ENCODE measurements at regions of chr2 and their contacts with region 1.

Region 1: DNA sequence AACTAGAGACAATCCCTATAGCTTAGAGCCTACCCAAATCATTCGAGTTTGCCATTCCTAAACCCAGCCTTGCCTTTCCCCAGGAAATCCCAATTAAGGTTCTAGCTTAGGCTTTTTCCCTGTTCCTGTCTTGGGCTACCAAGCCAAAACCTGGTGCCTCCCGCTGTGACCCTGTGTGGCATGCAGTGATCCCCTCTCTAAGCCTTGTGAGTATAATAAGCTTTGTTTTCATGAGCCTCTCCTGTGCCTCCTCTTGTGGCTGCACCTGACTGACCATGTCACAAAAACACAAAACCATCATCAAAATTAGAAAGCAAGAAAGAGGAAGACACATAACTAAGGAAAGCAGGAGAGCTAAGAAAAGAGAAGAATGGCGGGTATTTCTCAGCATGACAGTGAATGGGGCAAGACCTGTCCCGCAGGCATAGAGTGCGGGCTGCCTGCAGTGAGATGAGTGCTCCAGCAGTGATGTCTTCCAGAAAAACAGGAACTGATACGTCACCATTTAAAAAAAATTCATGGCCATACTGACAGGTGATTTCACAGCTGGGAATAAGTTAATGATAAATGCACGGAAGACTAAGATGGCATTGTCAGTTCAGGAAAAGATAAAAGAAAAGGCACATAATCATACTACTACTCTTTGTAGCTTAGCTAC is 9.2 kb upstream of the PAIP2B start:
- DNase-seq: peak in 1 of 2 experiments; percentile 55
- H3K4me3 ChIP-seq: no peak overlapping the region
- H3K27ac ChIP-seq: no peak overlapping the region; the same call in 1 of the 2 replicates
- H3K4me1 ChIP-seq: peaks cover 0 to 6% (median 0%) of the 10 kb centered on the region in 4 experiments; a peak in 3 of 7 replicates
- H3K27me3 ChIP-seq: no peaks in the 10 kb centered on the region; a peak in 1 of 7 replicates
- CTCF ChIP-seq: no peak
- EP300 ChIP-seq: no peak
- POLR2A ChIP-seq: no peak
- RAD21 ChIP-seq: no peak

Region 2: DNA sequence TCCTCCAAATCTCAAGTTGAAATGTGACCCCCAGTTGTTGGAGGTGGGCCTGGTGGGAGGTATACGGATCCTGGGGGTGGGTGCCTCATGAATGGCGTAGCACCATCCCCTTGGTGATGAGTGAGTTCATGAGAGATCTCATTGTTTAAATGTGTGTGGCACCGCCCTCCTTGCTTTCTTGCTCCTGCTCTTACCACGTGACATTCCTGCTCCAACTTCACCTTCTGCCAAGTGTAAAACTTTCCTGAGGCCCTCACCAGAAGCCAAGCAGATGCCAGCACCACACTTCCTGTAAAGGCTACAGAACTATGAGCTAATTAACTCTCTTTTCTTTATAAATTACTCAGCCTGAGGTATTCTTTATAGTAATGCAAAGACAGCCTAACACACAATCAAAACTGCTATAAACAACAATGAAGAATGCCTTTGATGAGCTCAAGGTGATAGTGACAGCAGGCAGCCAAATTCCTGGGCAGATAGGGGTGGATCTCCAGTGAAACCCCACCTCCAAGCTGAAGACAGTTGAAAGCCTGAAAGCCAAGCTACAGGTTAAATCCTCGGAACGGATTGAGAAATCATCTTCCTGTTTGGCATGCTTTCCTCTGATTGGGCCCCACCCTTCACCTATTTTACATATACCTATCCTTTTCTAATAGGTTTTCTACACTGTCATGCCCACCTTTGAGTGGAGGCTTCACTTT is 132.9 kb before region 1 on chr2:
- CTCF ChIA-PET with region 1: no interaction called
- POLR2A ChIA-PET with region 1: no interaction called
- DNase-seq: peak in 1 of 2 experiments; percentile 72
- H3K4me3 ChIP-seq: no peak overlapping the region
- H3K27ac ChIP-seq: no peak overlapping the region
- H3K4me1 ChIP-seq: peaks cover 0 to 7% (median 5%) of the 10 kb centered on the region in 4 experiments; a peak in 4 of 7 replicates
- H3K27me3 ChIP-seq: no peaks in the 10 kb centered on the region
- CTCF ChIP-seq: no peak
- EP300 ChIP-seq: no peak
- POLR2A ChIP-seq: no peak
- RAD21 ChIP-seq: no peak

Region 3: DNA sequence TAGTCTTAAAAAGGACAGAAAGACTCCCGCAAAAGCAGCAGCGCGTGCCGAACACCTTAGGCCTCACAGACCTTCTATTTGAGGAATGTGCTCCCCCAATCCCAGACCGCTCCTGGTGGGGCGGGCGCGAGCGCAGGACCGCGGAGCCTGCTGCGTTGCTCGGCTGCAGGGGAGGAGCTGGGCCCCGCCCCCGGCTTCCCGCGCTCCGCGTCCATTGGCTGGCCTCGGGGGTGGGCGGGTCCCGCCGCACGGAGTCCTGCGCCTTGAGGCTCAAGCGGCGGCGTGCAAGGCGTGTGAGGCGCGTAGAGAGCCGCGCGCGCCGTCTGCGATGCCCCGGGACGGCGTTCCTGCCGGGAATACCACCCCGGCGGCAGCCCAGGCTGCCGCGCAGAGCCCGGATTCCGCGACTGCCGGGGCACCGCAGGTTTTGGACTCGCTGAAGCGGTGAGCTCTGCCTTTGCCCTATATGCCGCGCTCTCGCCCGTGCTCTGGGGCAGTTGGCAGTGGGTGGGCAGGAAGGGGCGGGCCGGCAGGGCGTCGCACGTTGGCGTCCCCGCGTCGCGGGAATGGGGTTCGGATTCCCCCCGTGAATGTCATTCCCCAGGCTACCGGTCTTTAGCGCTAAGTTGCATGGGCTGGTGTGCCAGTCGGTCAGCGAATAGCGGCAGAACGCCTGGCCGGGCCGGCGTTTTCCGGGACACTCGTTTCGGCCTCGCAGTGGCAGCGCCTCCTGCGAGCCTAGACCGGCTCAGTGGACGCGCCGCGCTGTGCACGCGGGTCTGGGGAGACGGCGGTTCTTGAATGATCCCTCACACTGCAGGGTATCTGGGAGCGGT is 40.5 kb after region 1 on chr2:
- CTCF ChIA-PET with region 1: interaction called, 16 read pairs
- POLR2A ChIA-PET with region 1: no interaction called
- DNase-seq: peak; percentile 77 to 98
- H3K4me3 ChIP-seq: peak overlapping the region; percentile 49 to 72 (median 64)
- H3K27ac ChIP-seq: no peak overlapping the region
- H3K4me1 ChIP-seq: peaks cover 0 to 12% (median 7%) of the 10 kb centered on the region in 4 experiments; a peak in 5 of 7 replicates
- H3K27me3 ChIP-seq: peaks cover 0 to 7% (median 2%) of the 10 kb centered on the region in 4 experiments; a peak in 4 of 7 replicates
- CTCF ChIP-seq: no peak
- EP300 ChIP-seq: no peak; a peak in 1 of 3 replicates
- POLR2A ChIP-seq: peak in 1 of 2 experiments; percentile 74; a peak in 2 of 3 replicates
- RAD21 ChIP-seq: no peak; a peak in 1 of 4 replicates